Activated CD8-positive, alpha-beta T cell treated with anti-CD3 and anti-CD28 coated beads, Interleukin-2, amount 10 ng/mL, durations not matched to agents 7 days and 5 days (primary cell): ENCODE measurements at regions of chr1 and their contacts with region 1.

Region 1: GRCh38 chr1:156065212-156065611 is 4.3 kb downstream of the RAB25 start:
- DNase-seq: no peak
- ATAC-seq: no peak
- H3K4me3 Mint-ChIP-seq: no peak overlapping the region
- H3K27ac Mint-ChIP-seq: no peak overlapping the region
- H3K4me1 Mint-ChIP-seq: peaks cover 10% of the 10 kb centered on the region
- H3K27me3 Mint-ChIP-seq: no peaks in the 10 kb centered on the region

Region 2: DNA sequence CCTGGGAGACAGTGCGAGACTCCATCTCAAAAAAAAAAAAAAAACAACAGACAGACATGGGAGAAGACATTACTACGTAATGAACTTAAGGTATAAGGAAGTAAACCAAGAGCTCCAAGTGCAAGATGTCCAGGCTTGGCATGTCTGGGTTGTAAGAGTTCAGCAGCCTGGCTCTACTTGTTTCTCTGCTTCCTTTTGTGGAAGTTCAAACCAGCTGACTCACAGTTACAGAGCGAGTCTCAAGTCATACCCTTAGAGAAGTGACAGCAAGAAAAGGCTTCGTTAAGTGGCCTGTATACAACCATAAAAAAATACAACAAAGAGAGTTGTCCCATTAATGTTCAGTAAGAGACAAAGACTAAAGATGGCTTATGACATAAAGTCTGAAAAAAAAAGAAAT is 155.3 kb before region 1 on chr1:
- CTCF ChIA-PET with region 1: no interaction called
- POLR2A ChIA-PET with region 1: no interaction called
- DNase-seq: no peak
- ATAC-seq: no peak
- H3K4me3 Mint-ChIP-seq: peak overlapping the region; percentile 99
- H3K27ac Mint-ChIP-seq: peak overlapping the region; percentile 6
- H3K4me1 Mint-ChIP-seq: peaks cover 26% of the 10 kb centered on the region
- H3K27me3 Mint-ChIP-seq: no peaks in the 10 kb centered on the region

Region 3: GRCh38 chr1:155934097-155934935 is 130.9 kb before region 1 on chr1 and contains the start of gene KHDC4:
- CTCF ChIA-PET with region 1: interaction called, 25 read pairs
- POLR2A ChIA-PET with region 1: interaction called, 4 read pairs
- DNase-seq: peak; percentile 98
- ATAC-seq: peak; percentile 94
- H3K4me3 Mint-ChIP-seq: no peak within 1 kb of the TSS
- H3K27ac Mint-ChIP-seq: no peak within 1 kb of the TSS
- H3K4me1 Mint-ChIP-seq: peaks cover 44% of the 10 kb centered on the region
- H3K27me3 Mint-ChIP-seq: no peaks in the 10 kb centered on the region
- total RNA-seq, gene KHDC4: 64.5 to 68.9 TPM

Region 4: GRCh38 chr1:156020292-156021089 is 44.7 kb before region 1 on chr1 and contains the start of gene SSR2:
- CTCF ChIA-PET with region 1: interaction called, 16 read pairs
- POLR2A ChIA-PET with region 1: no interaction called
- DNase-seq: peak; percentile 93
- ATAC-seq: peak; percentile 99
- H3K4me3 Mint-ChIP-seq: peak within 1 kb of the TSS; percentile 98
- H3K27ac Mint-ChIP-seq: peak within 1 kb of the TSS; percentile 99
- H3K4me1 Mint-ChIP-seq: peaks cover 32% of the 10 kb centered on the region
- H3K27me3 Mint-ChIP-seq: peaks cover 9% of the 10 kb centered on the region
- total RNA-seq, gene SSR2: 216 to 233 TPM

Region 5: DNA sequence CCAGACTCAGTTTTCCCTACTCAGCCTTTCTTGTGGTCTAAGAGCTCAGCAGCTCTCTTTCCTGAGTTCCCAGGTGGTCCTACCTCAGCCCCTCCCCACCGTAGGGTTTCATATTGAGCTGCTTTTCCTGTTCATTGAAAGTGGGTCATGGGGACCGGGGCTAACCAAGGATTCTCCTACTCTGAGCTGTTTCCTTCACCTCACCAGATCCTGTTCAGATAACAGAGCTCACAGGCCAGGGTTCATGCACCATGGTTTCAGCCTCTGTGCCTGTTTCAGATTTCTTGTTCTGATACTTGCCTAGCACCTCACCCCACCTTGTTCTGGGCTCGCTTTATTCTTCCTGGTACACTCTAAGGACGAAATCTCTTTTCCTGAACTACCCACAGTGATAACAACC is 20.1 kb before region 1 on chr1:
- CTCF ChIA-PET with region 1: interaction called, 14 read pairs
- POLR2A ChIA-PET with region 1: interaction called, 3 read pairs
- DNase-seq: no peak
- ATAC-seq: peak; percentile 49
- H3K4me3 Mint-ChIP-seq: no peak overlapping the region
- H3K27ac Mint-ChIP-seq: peak overlapping the region; percentile 60
- H3K4me1 Mint-ChIP-seq: peaks cover 7% of the 10 kb centered on the region
- H3K27me3 Mint-ChIP-seq: no peaks in the 10 kb centered on the region

Region 6: GRCh38 chr1:156129706-156130581 is 64.7 kb after region 1 on chr1:
- CTCF ChIA-PET with region 1: interaction called, 16 read pairs
- POLR2A ChIA-PET with region 1: no interaction called
- DNase-seq: peak; percentile 83
- ATAC-seq: no peak
- H3K4me3 Mint-ChIP-seq: no peak overlapping the region
- H3K27ac Mint-ChIP-seq: no peak overlapping the region
- H3K4me1 Mint-ChIP-seq: peaks cover 51% of the 10 kb centered on the region
- H3K27me3 Mint-ChIP-seq: peaks cover 7% of the 10 kb centered on the region